CD4-positive, alpha-beta memory T cell (primary cell): ENCODE measurements at regions of chr19 and their contacts with region 1.

Region 1: GRCh38 chr19:1269065-1269477 is at the start of gene CIRBP:
- DNase-seq: peak; percentile 99 to 100 (median 99)
- H3K4me3 ChIP-seq: peak within 1 kb of the TSS; percentile 90 to 100
- H3K4me3 Mint-ChIP-seq: peak within 1 kb of the TSS; percentile 89 to 93 (median 91)
- H3K27ac ChIP-seq: peak within 1 kb of the TSS; percentile 77
- H3K27ac Mint-ChIP-seq: peak within 1 kb of the TSS; percentile 91 to 98 (median 96)
- H3K4me1 ChIP-seq: peaks cover 71% of the 10 kb centered on the region
- H3K4me1 Mint-ChIP-seq: peaks cover 35 to 77% (median 58%) of the 10 kb centered on the region in 4 donors
- H3K27me3 ChIP-seq: no peaks in the 10 kb centered on the region
- H3K27me3 Mint-ChIP-seq: no peaks in the 10 kb centered on the region
- total RNA-seq, gene CIRBP: 574 to 638 TPM

Region 2: DNA sequence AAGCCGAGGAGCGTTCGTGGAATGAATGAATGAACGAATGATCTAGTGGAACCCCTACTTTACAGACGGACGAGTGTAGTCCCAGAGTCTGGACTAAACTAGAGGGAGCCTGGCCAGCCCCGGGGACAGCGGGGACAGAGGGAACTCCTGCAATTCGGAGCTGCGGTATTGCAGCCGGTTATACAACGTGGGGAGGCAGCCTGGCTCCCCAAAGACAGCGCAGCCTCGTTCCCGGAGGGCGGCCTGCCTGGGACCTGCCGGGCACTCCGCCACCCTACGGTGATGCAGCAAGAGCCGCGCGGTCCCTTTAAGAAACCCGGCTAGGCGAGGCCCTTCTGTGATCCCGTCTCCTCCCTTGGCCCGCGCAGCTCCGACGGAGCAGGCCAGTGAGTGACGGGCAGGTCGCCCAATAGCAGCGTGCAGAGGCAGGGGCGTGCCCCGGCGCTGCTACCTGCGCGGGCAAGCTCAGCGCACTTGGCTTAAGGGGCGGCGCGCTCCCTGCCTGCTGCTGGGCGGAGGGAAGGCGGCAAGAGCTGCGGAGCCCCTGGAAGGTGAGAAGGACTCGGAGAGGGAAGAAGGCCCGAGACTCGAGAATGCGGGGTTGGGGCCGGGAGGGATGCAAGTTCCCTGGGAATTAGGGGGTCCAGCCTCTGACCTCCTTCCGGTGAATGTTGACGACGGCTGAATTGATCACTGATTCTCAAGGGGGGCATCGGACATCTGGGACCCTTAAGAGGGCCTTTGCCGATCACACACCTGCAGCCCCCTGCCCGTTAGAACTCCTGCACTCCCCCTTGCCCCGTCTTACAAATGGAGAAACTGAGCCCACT is 229.2 kb before region 1 on chr19 and contains the start of gene ABCA7:
- CTCF ChIA-PET with region 1: no interaction called
- POLR2A ChIA-PET with region 1: interaction called, 22 read pairs
- intact Hi-C with region 1: no loop called
- DNase-seq: peak; percentile 98 to 99 (median 98)
- H3K4me3 ChIP-seq: peak within 1 kb of the TSS; percentile 56 to 100
- H3K4me3 Mint-ChIP-seq: peak within 1 kb of the TSS; percentile 95 to 100 (median 97)
- H3K27ac ChIP-seq: peak within 1 kb of the TSS; percentile 75
- H3K27ac Mint-ChIP-seq: peak within 1 kb of the TSS; percentile 91 to 97 (median 95)
- H3K4me1 ChIP-seq: peaks cover 54% of the 10 kb centered on the region
- H3K4me1 Mint-ChIP-seq: peaks cover 27 to 69% (median 48%) of the 10 kb centered on the region in 4 donors
- H3K27me3 ChIP-seq: no peaks in the 10 kb centered on the region
- H3K27me3 Mint-ChIP-seq: no peaks in the 10 kb centered on the region
- total RNA-seq, gene ABCA7: 313 to 319 TPM

Region 3: GRCh38 chr19:1082172-1082927 is 186.7 kb before region 1 on chr19:
- CTCF ChIA-PET with region 1: no interaction called
- POLR2A ChIA-PET with region 1: interaction called, 25 read pairs
- intact Hi-C with region 1: no loop called
- DNase-seq: peak; percentile 84 to 93 (median 87)
- H3K4me3 ChIP-seq: no peak overlapping the region
- H3K4me3 Mint-ChIP-seq: peak overlapping the region; percentile 20 to 84 (median 68)
- H3K27ac ChIP-seq: peak overlapping the region; percentile 47
- H3K27ac Mint-ChIP-seq: peak overlapping the region; percentile 87 to 98 (median 91)
- H3K4me1 ChIP-seq: peaks cover 86% of the 10 kb centered on the region
- H3K4me1 Mint-ChIP-seq: peaks cover 10 to 66% (median 36%) of the 10 kb centered on the region in 4 donors
- H3K27me3 ChIP-seq: no peaks in the 10 kb centered on the region
- H3K27me3 Mint-ChIP-seq: no peaks in the 10 kb centered on the region

Region 4: DNA sequence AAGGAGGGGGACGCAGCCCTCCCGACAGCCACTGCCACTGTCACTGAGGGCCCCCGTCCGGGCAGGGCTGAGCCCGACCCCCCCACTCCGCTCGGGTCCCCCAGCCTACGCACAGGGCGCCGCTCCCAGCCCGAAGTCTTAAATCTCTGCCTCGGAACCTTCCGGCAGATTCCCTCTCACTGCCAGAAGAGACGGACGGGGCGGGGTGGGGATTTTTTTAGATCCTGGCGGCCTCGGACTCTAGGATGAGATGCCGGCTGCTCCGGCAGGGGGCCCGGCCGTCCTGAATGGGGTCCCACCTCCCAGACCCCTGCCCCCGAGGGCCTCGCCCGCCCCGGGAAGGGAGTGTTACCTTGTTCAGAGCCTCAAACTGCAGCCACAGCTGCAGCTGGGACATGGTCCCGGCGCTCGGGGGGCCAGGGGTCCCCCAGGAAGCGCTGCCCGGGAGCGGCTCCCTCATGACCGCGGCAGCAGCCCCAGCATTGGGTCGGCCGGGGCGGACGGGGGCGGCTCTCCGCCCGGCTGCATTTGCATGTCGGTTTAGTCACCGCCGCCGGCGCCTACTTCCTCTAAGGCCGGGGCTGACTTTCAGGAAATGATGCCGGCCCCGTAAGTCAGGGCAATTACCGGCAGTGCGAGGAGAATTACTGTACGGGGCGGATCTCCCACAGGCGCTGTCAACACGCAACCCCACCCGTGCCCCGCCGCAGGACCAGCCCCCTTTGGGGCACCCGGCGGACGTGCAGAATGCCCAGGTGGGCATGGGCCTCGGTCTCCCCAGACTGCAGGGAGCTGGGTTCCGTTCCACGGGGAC is 137.1 kb before region 1 on chr19:
- CTCF ChIA-PET with region 1: no interaction called
- POLR2A ChIA-PET with region 1: interaction called, 21 read pairs
- intact Hi-C with region 1: no loop called
- DNase-seq: peak; percentile 82 to 92 (median 83)
- H3K4me3 ChIP-seq: peak overlapping the region; percentile 61 to 89
- H3K4me3 Mint-ChIP-seq: peak overlapping the region; percentile 85 to 92 (median 88)
- H3K27ac ChIP-seq: peak overlapping the region; percentile 90
- H3K27ac Mint-ChIP-seq: peak overlapping the region; percentile 91 to 94 (median 94)
- H3K4me1 ChIP-seq: peaks cover 60% of the 10 kb centered on the region
- H3K4me1 Mint-ChIP-seq: peaks cover 7 to 35% (median 23%) of the 10 kb centered on the region in 4 donors
- H3K27me3 ChIP-seq: no peaks in the 10 kb centered on the region
- H3K27me3 Mint-ChIP-seq: no peaks in the 10 kb centered on the region

Region 5: GRCh38 chr19:1249298-1249989 is 19.6 kb before region 1 on chr19:
- CTCF ChIA-PET with region 1: interaction called, 364 read pairs
- POLR2A ChIA-PET with region 1: interaction called, 650 read pairs
- intact Hi-C with region 1: loop called (anchors 1 kb)
- DNase-seq: peak; percentile 92 to 97 (median 95)
- H3K4me3 ChIP-seq: peak overlapping the region in 1 of 2 donors; percentile 77
- H3K4me3 Mint-ChIP-seq: peak overlapping the region; percentile 83 to 94 (median 90)
- H3K27ac ChIP-seq: peak overlapping the region; percentile 92
- H3K27ac Mint-ChIP-seq: peak overlapping the region; percentile 89 to 94 (median 91)
- H3K4me1 ChIP-seq: peaks cover 33% of the 10 kb centered on the region
- H3K4me1 Mint-ChIP-seq: peaks cover 2 to 26% (median 9%) of the 10 kb centered on the region in 4 donors
- H3K27me3 ChIP-seq: no peaks in the 10 kb centered on the region
- H3K27me3 Mint-ChIP-seq: no peaks in the 10 kb centered on the region

Region 6: DNA sequence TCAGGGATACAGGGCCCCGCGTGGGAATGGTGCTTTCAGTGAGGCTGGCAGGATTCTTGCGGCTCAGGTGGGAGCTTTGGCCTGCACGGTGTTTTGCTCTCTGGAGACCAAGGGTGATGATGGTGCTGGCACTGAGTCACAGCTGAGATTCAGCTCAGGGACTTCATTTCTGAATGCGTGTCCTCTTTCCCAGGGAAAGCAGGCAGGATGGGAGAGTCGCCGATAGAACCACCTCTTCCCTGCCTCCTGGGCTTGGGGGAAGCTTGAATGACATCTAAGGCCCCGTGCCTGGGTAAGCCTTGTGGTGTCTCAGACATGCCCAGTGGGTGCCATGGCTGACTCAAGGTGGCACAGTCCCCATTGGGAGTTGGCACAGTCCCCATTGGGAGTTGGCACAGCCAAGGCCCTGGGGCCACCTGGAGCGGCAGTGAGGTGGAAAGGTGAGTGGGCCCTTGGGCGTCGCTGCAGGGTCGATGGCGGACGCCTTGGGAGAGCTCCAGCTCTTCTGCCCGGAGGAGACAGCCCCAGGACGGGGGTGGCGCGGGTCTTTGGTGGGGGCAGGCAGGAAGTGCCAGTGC is 147.3 kb after region 1 on chr19:
- CTCF ChIA-PET with region 1: no interaction called
- POLR2A ChIA-PET with region 1: no interaction called
- intact Hi-C with region 1: no loop called
- DNase-seq: no peak
- H3K4me3 ChIP-seq: no peak overlapping the region
- H3K4me3 Mint-ChIP-seq: peak overlapping the region in 3 of 8 donors; percentile 21 to 41 (median 34)
- H3K27ac ChIP-seq: no peak overlapping the region
- H3K27ac Mint-ChIP-seq: peak overlapping the region in 4 of 7 donors; percentile 29 to 89 (median 45)
- H3K4me1 ChIP-seq: peaks cover 59% of the 10 kb centered on the region
- H3K4me1 Mint-ChIP-seq: peaks cover 28 to 62% (median 50%) of the 10 kb centered on the region in 4 donors
- H3K27me3 ChIP-seq: no peaks in the 10 kb centered on the region
- H3K27me3 Mint-ChIP-seq: no peaks in the 10 kb centered on the region

Region 7: GRCh38 chr19:1470203-1471009 is 201.3 kb after region 1 on chr19:
- CTCF ChIA-PET with region 1: no interaction called
- POLR2A ChIA-PET with region 1: interaction called, 11 read pairs
- intact Hi-C with region 1: no loop called
- DNase-seq: peak; percentile 66 to 80 (median 70)
- H3K4me3 ChIP-seq: peak overlapping the region; percentile 57 to 58
- H3K4me3 Mint-ChIP-seq: peak overlapping the region; percentile 67 to 83 (median 77)
- H3K27ac ChIP-seq: no peak overlapping the region
- H3K27ac Mint-ChIP-seq: peak overlapping the region in 1 of 7 donors; percentile 58
- H3K4me1 ChIP-seq: peaks cover 54% of the 10 kb centered on the region
- H3K4me1 Mint-ChIP-seq: peaks cover 3 to 21% (median 8%) of the 10 kb centered on the region in 4 donors
- H3K27me3 ChIP-seq: no peaks in the 10 kb centered on the region
- H3K27me3 Mint-ChIP-seq: peaks cover 0 to 1% of the 10 kb centered on the region in 2 donors